Activated CD8-positive, alpha-beta T cell treated with anti-CD3 and anti-CD28 coated beads, Interleukin-2, amount 10 ng/mL, durations not matched to agents 7 days and 5 days (primary cell): ENCODE measurements at regions of chr3 and their contacts with region 1.

Region 1: GRCh38 chr3:18575573-18575972 is 150.4 kb upstream of the SATB1 start:
- DNase-seq: no peak
- ATAC-seq: no peak
- H3K4me3 Mint-ChIP-seq: no peak overlapping the region
- H3K27ac Mint-ChIP-seq: no peak overlapping the region
- H3K4me1 Mint-ChIP-seq: no peaks in the 10 kb centered on the region
- H3K27me3 Mint-ChIP-seq: no peaks in the 10 kb centered on the region

Region 2: GRCh38 chr3:18586076-18586475 is 10.5 kb after region 1 on chr3:
- CTCF ChIA-PET with region 1: interaction called, 10 read pairs
- POLR2A ChIA-PET with region 1: no interaction called
- DNase-seq: no peak
- ATAC-seq: no peak
- H3K4me3 Mint-ChIP-seq: no peak overlapping the region
- H3K27ac Mint-ChIP-seq: no peak overlapping the region
- H3K4me1 Mint-ChIP-seq: peaks cover 7% of the 10 kb centered on the region
- H3K27me3 Mint-ChIP-seq: no peaks in the 10 kb centered on the region